Activated T-helper 1 cell treated with anti-CD3 and anti-CD28 coated beads, Interleukin-12 subunit alpha, Interleukin-12 subunit beta, Interleukin-2, Interleukin-4 antibody, amounts not matched to agents 30 ng/mL and 10 ng/mL and 1 ng/mL, durations not matched to agents 14 hours and 24 hours and 36 hours (primary cell): ENCODE measurements at regions of chr7 and their contacts with region 1.

Region 1: GRCh38 chr7:130063036-130063435 is 7.3 kb upstream of the KLHDC10 start:
- DNase-seq: peak; percentile 36
- H3K4me3 Mint-ChIP-seq: no peak overlapping the region
- H3K27ac Mint-ChIP-seq: no peak overlapping the region
- H3K4me1 Mint-ChIP-seq: peaks cover 4% of the 10 kb centered on the region
- H3K27me3 Mint-ChIP-seq: peaks cover 2% of the 10 kb centered on the region

Region 2: GRCh38 chr7:129975309-129975708 is 87.7 kb before region 1 on chr7:
- intact Hi-C with region 1: no loop called
- DNase-seq: no peak
- H3K4me3 Mint-ChIP-seq: no peak overlapping the region
- H3K27ac Mint-ChIP-seq: no peak overlapping the region
- H3K4me1 Mint-ChIP-seq: no peaks in the 10 kb centered on the region
- H3K27me3 Mint-ChIP-seq: peaks cover 4% of the 10 kb centered on the region

Region 3: DNA sequence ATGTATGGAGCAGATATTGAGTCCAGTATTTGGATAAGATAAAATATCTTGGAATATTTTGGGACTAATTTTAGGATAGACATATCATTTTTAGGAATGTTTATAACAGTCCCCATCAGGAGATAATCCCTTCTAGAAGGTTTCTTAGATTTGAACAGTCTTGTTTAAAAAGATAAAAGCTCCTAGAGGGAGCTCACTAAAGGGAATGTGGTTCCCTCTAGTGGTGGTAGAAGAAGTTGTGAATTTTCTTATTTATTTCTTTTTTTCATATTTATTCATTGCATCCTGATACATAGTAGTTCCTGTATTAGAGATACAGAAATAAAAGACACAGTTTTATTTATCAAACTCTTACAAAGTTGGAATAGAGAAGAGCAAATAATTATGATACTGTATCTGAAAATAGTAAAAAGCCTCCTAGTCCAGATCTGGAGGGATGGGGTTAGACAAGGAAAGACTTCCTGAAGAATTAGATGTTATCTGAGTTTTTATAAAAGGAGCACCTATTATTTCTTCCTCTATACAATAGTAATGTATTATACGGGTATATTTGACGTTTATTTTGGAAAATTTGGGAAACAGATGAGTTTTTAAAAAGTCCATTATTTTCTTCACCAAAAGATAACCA is 695.5 kb after region 1 on chr7:
- intact Hi-C with region 1: loop called (anchors 1 kb)
- DNase-seq: no peak
- H3K4me3 Mint-ChIP-seq: no peak overlapping the region
- H3K27ac Mint-ChIP-seq: no peak overlapping the region
- H3K4me1 Mint-ChIP-seq: no peaks in the 10 kb centered on the region
- H3K27me3 Mint-ChIP-seq: peaks cover 13% of the 10 kb centered on the region

Region 4: DNA sequence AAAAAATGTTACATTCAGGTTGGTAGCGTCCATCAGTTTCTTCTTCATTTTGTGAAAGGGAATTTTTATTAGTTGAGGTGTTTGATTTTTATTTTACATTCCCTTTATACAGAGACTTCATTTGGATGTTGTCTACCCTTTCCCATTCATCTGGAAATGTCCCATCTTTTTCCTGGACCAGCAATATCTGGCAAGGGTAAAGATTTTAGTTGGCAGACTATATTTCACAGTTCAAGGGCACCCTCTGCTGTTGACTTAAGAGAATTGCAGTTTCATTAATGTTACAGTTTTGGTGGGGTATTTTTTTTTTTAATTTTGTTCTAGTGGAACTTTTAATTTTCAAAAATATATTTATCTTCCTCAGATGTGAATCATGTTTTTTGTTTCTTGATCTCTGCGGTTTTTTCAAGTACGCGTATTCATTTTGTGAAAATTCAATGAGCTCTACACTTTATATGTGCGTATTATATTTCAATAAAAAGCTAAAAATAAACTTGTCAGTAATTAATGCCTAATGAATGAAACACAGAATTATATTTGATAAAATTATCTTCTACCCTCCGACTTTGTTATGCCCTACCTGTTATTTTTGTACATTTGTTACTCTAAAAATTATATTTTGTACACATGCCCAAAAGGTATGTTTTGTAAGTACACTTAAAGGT is 768.9 kb after region 1 on chr7:
- intact Hi-C with region 1: loop called (anchors 1 kb)
- DNase-seq: no peak
- H3K4me3 Mint-ChIP-seq: no peak overlapping the region
- H3K27ac Mint-ChIP-seq: no peak overlapping the region
- H3K4me1 Mint-ChIP-seq: no peaks in the 10 kb centered on the region
- H3K27me3 Mint-ChIP-seq: peaks cover 11% of the 10 kb centered on the region